ENCODE measurements at regions of chr19 and their contacts with region 1.

Region 1: GRCh38 chr19:15107061-15108010 is at the start of gene SYDE1:
- DNase-seq: peak; percentile 46
- H3K4me3 Mint-ChIP-seq: peak within 1 kb of the TSS; percentile 78
- H3K27ac Mint-ChIP-seq: peak within 1 kb of the TSS; percentile 88
- H3K4me1 Mint-ChIP-seq: peaks cover 15% of the 10 kb centered on the region
- H3K27me3 Mint-ChIP-seq: no peaks in the 10 kb centered on the region
- CTCF ChIP-seq: no peak
- total RNA-seq, gene SYDE1: 22.6 and 24.2 TPM in 2 replicates

Region 2: GRCh38 chr19:14933506-14933905 is 173.8 kb before region 1 on chr19:
- CTCF ChIA-PET with region 1: no interaction called
- POLR2A ChIA-PET with region 1: no interaction called
- intact Hi-C with region 1: no loop called
- DNase-seq: no peak
- H3K4me3 Mint-ChIP-seq: no peak overlapping the region
- H3K27ac Mint-ChIP-seq: no peak overlapping the region
- H3K4me1 Mint-ChIP-seq: no peaks in the 10 kb centered on the region
- H3K27me3 Mint-ChIP-seq: no peaks in the 10 kb centered on the region
- CTCF ChIP-seq: no peak

Region 3: GRCh38 chr19:15161028-15161989 is 54.0 kb after region 1 on chr19:
- CTCF ChIA-PET with region 1: no interaction called
- POLR2A ChIA-PET with region 1: no interaction called
- intact Hi-C with region 1: no loop called
- DNase-seq: peak; percentile 66
- H3K4me3 Mint-ChIP-seq: no peak overlapping the region
- H3K27ac Mint-ChIP-seq: no peak overlapping the region
- H3K4me1 Mint-ChIP-seq: no peaks in the 10 kb centered on the region
- H3K27me3 Mint-ChIP-seq: no peaks in the 10 kb centered on the region
- CTCF ChIP-seq: peak; percentile 50

Region 4: GRCh38 chr19:15234043-15234873 is 126.9 kb after region 1 on chr19:
- CTCF ChIA-PET with region 1: no interaction called
- POLR2A ChIA-PET with region 1: no interaction called
- intact Hi-C with region 1: no loop called
- DNase-seq: peak; percentile 14
- H3K4me3 Mint-ChIP-seq: no peak overlapping the region
- H3K27ac Mint-ChIP-seq: peak overlapping the region; percentile 54
- H3K4me1 Mint-ChIP-seq: peaks cover 5% of the 10 kb centered on the region
- H3K27me3 Mint-ChIP-seq: no peaks in the 10 kb centered on the region
- CTCF ChIP-seq: no peak

Region 5: GRCh38 chr19:15836595-15837337 is 729.4 kb after region 1 on chr19:
- CTCF ChIA-PET with region 1: no interaction called
- POLR2A ChIA-PET with region 1: no interaction called
- intact Hi-C with region 1: loop called (anchors 2 kb)
- DNase-seq: peak; percentile 99
- H3K4me3 Mint-ChIP-seq: peak overlapping the region; percentile 67
- H3K27ac Mint-ChIP-seq: peak overlapping the region; percentile 79
- H3K4me1 Mint-ChIP-seq: peaks cover 12% of the 10 kb centered on the region
- H3K27me3 Mint-ChIP-seq: no peaks in the 10 kb centered on the region
- CTCF ChIP-seq: no peak

Measured in MCF 10A (cell line).